Endothelial cell of umbilical vein (primary cell): ENCODE measurements at regions of chr1 and their contacts with region 1.

Region 1: GRCh38 chr1:244815600-244816099 is 19.8 kb upstream of the COX20 start:
- DNase-seq: no peak
- H3K4me3 ChIP-seq: no peak overlapping the region
- H3K27ac ChIP-seq: no peak overlapping the region
- H3K4me1 ChIP-seq: no peaks in the 10 kb centered on the region
- H3K27me3 ChIP-seq: peaks cover 3 to 7% of the 10 kb centered on the region in 2 experiments
- CTCF ChIP-seq: no peak
- POLR2A ChIP-seq: no peak

Region 2: DNA sequence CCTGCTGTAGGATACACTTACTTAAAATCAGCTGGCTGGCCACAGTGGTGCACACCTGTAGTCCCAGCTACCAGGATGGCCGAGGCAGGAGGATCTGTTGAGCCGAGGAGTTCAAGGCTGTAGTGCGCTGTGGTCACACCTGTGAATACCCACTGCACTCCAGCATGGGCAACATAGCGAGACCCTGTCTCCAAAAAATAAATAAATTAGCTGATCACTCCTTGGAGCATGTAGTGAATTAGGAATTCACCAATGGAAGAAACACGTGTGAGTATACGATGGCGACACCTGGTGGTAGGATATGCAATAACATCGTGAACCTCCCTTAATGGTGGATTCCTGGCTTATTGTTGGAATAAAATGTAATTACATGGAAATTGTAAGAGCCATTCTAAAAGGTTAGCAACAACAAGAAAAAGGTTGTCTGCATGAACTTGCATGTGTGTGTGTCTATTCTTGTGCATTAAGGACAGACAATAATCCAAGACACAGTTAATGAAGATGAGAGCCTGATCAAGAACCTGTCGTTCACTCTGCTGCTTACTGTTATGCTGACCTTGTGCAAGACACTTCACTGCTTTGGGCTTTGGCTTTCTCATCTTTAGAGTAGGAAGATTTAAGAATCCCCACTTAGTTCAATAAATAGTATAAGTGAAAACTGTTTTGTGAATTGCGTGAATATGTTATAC is 18.8 kb before region 1 on chr1:
- CTCF ChIA-PET with region 1: interaction called, 11 read pairs
- POLR2A ChIA-PET with region 1: no interaction called
- dilution Hi-C with region 1: no loop called
- intact Hi-C with region 1: no loop called
- DNase-seq: peak; percentile 70
- H3K4me3 ChIP-seq: no peak overlapping the region
- H3K27ac ChIP-seq: no peak overlapping the region
- H3K4me1 ChIP-seq: no peaks in the 10 kb centered on the region
- H3K27me3 ChIP-seq: no peaks in the 10 kb centered on the region
- CTCF ChIP-seq: peak; percentile 63 to 69
- POLR2A ChIP-seq: no peak

Region 3: GRCh38 chr1:244980605-244981004 is 165.0 kb after region 1 on chr1:
- CTCF ChIA-PET with region 1: no interaction called
- POLR2A ChIA-PET with region 1: interaction called, 12 read pairs
- dilution Hi-C with region 1: no loop called
- intact Hi-C with region 1: no loop called
- DNase-seq: no peak
- H3K4me3 ChIP-seq: no peak overlapping the region
- H3K27ac ChIP-seq: no peak overlapping the region
- H3K4me1 ChIP-seq: no peaks in the 10 kb centered on the region
- H3K27me3 ChIP-seq: no peaks in the 10 kb centered on the region
- CTCF ChIP-seq: no peak
- POLR2A ChIP-seq: no peak